ENCODE measurements at regions of chr10 and their contacts with region 1.

Region 1: DNA sequence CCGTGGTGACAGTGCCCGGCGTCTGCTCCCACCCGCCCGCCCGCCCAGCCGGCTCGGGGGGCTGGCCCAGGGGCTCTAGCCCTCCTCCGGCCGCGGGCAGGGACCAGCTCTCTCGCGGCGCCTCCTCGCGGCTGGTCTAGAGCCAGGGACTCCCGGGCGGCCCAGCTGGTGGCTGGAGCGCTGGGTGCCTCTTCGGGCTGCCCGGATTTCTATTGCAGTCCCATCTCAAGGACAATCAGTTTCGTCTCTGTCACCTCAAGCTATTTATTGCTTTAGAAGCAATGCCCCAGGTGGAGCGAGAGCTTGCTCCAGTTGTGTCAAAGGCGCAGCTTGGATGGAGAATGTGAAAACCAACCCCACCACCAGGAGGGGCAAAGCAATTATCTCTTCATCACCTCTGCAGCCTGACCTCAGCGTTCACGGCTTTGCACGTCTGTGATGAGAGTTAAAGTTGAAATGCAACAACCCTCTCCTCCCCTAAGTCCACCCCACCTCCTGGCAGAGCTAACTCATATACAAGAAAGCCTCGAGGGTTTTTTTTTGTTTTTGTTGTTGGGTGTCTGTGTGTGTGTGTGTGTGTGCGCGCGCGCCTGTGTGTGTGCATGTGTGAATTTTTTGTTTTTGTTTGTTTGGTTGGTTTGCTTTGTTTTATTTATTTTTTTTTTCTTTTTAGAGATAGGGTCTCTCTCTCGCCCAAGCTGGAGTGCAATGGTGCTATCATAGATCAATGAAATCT is at the start of gene ITGA8:
- DNase-seq: peak in 4 of 5 donors; percentile 45 to 68 (median 58)
- H3K4me3 ChIP-seq: peak within 1 kb of the TSS; percentile 54
- H3K27ac ChIP-seq: peak within 1 kb of the TSS; percentile 2 to 57
- H3K4me1 ChIP-seq: peaks cover 6% of the 10 kb centered on the region
- H3K27me3 ChIP-seq: no peaks in the 10 kb centered on the region
- CTCF ChIP-seq: peak in 2 of 3 donors; percentile 35
- EP300 ChIP-seq: no peak
- POLR2A ChIP-seq: no peak
- total RNA-seq, gene ITGA8: 4.2 to 32.5 (median 6.8) TPM

Region 2: GRCh38 chr10:15293862-15294842 is 425.9 kb before region 1 on chr10:
- intact Hi-C with region 1: no loop called
- DNase-seq: no peak
- H3K4me3 ChIP-seq: no peak overlapping the region
- H3K27ac ChIP-seq: no peak overlapping the region
- H3K4me1 ChIP-seq: no peaks in the 10 kb centered on the region
- H3K27me3 ChIP-seq: no peaks in the 10 kb centered on the region
- CTCF ChIP-seq: no peak
- EP300 ChIP-seq: no peak
- POLR2A ChIP-seq: no peak

Region 3: GRCh38 chr10:15370856-15371701 is 349.0 kb before region 1 on chr10 and contains the start of gene FAM171A1:
- intact Hi-C with region 1: no loop called
- DNase-seq: peak; percentile 45 to 74 (median 68)
- H3K4me3 ChIP-seq: peak within 1 kb of the TSS; percentile 60
- H3K27ac ChIP-seq: peak within 1 kb of the TSS; percentile 45 to 73
- H3K4me1 ChIP-seq: peaks cover 2% of the 10 kb centered on the region
- H3K27me3 ChIP-seq: no peaks in the 10 kb centered on the region
- CTCF ChIP-seq: peak in 1 of 3 donors; percentile 30
- EP300 ChIP-seq: no peak
- POLR2A ChIP-seq: no peak
- total RNA-seq, gene FAM171A1: 9.1 to 29.1 (median 23.9) TPM

Region 4: GRCh38 chr10:15439341-15439842 is 280.7 kb before region 1 on chr10:
- intact Hi-C with region 1: loop called in 3 of 4 experiments (anchors 5 to 10 kb)
- DNase-seq: peak; percentile 44 to 75 (median 62)
- H3K4me3 ChIP-seq: peak overlapping the region; percentile 17
- H3K27ac ChIP-seq: peak overlapping the region in 1 of 2 donors; percentile 61
- H3K4me1 ChIP-seq: peaks cover 8% of the 10 kb centered on the region
- H3K27me3 ChIP-seq: no peaks in the 10 kb centered on the region
- CTCF ChIP-seq: peak in 2 of 3 donors; percentile 24 to 35
- EP300 ChIP-seq: no peak
- POLR2A ChIP-seq: no peak

Region 5: GRCh38 chr10:15585303-15585715 is 134.8 kb before region 1 on chr10:
- intact Hi-C with region 1: loop called in 1 of 4 experiments (anchors 10 kb)
- DNase-seq: peak in 4 of 5 donors; percentile 32 to 61 (median 46)
- H3K4me3 ChIP-seq: no peak overlapping the region
- H3K27ac ChIP-seq: no peak overlapping the region
- H3K4me1 ChIP-seq: peaks cover 2% of the 10 kb centered on the region
- H3K27me3 ChIP-seq: no peaks in the 10 kb centered on the region
- CTCF ChIP-seq: peak in 2 of 3 donors; percentile 12 to 27
- EP300 ChIP-seq: no peak
- POLR2A ChIP-seq: no peak

Region 6: GRCh38 chr10:15603446-15604011 is 116.5 kb before region 1 on chr10:
- intact Hi-C with region 1: no loop called
- DNase-seq: no peak
- H3K4me3 ChIP-seq: no peak overlapping the region
- H3K27ac ChIP-seq: no peak overlapping the region
- H3K4me1 ChIP-seq: no peaks in the 10 kb centered on the region
- H3K27me3 ChIP-seq: no peaks in the 10 kb centered on the region
- CTCF ChIP-seq: no peak
- EP300 ChIP-seq: no peak
- POLR2A ChIP-seq: no peak

Region 7: DNA sequence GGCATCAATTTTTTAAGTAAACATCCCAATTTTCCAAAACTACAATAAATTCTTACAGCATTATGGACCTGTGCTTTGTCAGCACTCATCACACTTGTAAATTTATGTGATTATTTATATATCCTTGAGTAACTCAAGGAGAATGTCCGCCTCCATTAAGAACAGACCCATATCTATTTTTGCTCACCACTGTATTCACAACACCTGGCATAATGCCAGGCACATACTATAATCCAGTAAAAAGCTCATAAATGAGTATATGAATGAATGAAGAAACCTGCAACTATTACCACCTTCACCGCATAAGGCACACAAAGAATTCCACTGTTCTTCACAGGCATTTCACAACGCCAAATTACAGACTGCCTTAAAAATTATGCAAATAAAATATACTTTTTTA is 93.3 kb after region 1 on chr10:
- intact Hi-C with region 1: no loop called
- DNase-seq: no peak
- H3K4me3 ChIP-seq: no peak overlapping the region
- H3K27ac ChIP-seq: no peak overlapping the region
- H3K4me1 ChIP-seq: no peaks in the 10 kb centered on the region
- H3K27me3 ChIP-seq: no peaks in the 10 kb centered on the region
- CTCF ChIP-seq: no peak
- EP300 ChIP-seq: no peak
- POLR2A ChIP-seq: no peak

Measured in ovary (tissue), 10 donors.